ENCODE measurements at regions of chrX and their contacts with region 1.

Region 1: DNA sequence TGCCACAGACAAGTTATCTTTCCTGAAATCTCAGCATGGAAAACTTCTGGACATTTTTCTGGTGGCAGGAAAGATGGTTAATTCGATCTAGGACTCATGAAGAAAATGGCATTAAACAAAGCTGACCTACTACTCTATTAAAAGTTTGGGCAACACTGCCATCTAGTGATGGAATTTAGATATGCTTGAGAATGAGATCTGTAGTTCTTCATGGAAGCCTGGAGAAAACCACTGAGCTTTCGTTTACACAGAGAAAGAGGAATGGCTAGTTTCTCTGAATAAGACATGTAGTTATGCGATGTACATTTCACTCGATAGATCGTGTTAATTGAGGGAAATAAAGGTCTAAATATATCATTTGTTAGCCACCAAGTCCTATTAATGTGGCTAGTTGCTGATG is 51.7 kb upstream of the CHRDL1 start:
- DNase-seq: peak in 1 of 2 donors; percentile 12
- ATAC-seq: peak in 5 of 8 donors; percentile 46 to 64 (median 51)
- H3K4me3 ChIP-seq: no peak overlapping the region
- H3K27ac ChIP-seq: no peak overlapping the region
- H3K4me1 ChIP-seq: no peaks in the 10 kb centered on the region
- H3K27me3 ChIP-seq: peaks cover 0 to 73% (median 0%) of the 10 kb centered on the region in 7 donors
- CTCF ChIP-seq: peak; percentile 33 to 75 (median 59)

Region 2: DNA sequence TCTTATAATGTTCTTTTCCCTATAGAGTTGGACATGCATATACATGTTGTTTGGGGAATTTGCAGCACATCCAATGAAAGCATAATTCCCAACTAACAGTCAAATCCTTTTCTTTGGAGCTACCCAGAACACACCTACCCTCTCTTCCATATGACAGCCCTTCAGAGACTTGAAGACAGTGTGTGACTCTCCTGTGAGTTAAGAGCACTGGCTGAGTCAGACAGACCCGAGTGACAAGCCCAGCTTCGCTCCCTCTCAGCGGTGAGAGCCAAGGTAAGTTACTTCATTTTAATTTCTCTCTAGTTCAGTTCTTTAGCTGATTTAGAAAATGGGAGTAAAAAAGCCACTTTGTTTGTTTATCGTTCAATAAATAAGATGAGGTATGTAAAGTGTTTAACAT is 402.3 kb before region 1 on chrX:
- intact Hi-C with region 1: loop called in 9 of 10 experiments (anchors 1 to 5 kb)
- DNase-seq: no peak
- ATAC-seq: no peak
- H3K4me3 ChIP-seq: no peak overlapping the region
- H3K27ac ChIP-seq: no peak overlapping the region
- H3K4me1 ChIP-seq: no peaks in the 10 kb centered on the region
- H3K27me3 ChIP-seq: peaks cover 0 to 75% (median 0%) of the 10 kb centered on the region in 7 donors
- CTCF ChIP-seq: no peak

Region 3: GRCh38 chrX:110462957-110463356 is 384.4 kb before region 1 on chrX:
- intact Hi-C with region 1: loop called in 1 of 10 experiments (anchors 5 kb)
- DNase-seq: no peak
- ATAC-seq: no peak
- H3K4me3 ChIP-seq: no peak overlapping the region
- H3K27ac ChIP-seq: no peak overlapping the region
- H3K4me1 ChIP-seq: no peaks in the 10 kb centered on the region
- H3K27me3 ChIP-seq: peaks cover 0 to 23% (median 0%) of the 10 kb centered on the region in 7 donors
- CTCF ChIP-seq: no peak